Activated CD4-positive, alpha-beta T cell treated with anti-CD3 and anti-CD28 coated beads, Interleukin-2, amount 10 ng/mL, durations not matched to agents 24 days and 14 days (primary cell): ENCODE measurements at regions of chr9 and their contacts with region 1.

Region 1: DNA sequence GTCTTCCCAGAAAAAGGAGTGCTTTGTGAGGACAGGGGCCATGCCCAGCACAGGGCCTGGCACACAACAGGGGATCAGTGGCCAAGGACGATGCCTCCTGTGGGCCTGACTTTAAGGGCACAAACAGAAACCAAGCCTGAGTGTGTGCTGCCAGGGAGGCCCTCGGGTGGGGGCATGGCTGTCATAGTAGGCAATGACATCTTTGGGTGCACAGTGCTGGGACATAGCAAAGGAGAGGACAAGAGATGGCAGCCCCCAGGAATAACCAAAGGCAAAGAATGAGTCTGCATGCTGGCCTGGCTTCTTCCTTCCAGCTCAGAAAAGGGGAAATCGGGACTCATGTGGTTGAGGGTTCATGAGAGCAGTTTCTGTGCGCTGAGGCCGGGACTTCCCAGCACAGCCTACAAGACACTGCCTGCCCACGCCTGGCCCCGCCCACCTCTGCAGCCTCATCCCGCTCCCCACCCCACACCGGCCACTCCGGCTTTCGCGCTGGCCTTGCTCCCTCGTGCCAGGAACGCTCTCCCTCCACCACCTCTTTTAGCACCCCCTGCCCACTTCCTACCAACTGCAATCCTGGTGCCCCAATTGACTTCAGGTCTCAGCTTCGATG is 13.8 kb upstream of the LHX2 start:
- DNase-seq: peak; percentile 69
- H3K4me3 Mint-ChIP-seq: peak overlapping the region; percentile 48
- H3K27ac Mint-ChIP-seq: peak overlapping the region; percentile 46
- H3K4me1 Mint-ChIP-seq: peaks cover 27% of the 10 kb centered on the region
- H3K27me3 Mint-ChIP-seq: peaks cover 75% of the 10 kb centered on the region

Region 2: DNA sequence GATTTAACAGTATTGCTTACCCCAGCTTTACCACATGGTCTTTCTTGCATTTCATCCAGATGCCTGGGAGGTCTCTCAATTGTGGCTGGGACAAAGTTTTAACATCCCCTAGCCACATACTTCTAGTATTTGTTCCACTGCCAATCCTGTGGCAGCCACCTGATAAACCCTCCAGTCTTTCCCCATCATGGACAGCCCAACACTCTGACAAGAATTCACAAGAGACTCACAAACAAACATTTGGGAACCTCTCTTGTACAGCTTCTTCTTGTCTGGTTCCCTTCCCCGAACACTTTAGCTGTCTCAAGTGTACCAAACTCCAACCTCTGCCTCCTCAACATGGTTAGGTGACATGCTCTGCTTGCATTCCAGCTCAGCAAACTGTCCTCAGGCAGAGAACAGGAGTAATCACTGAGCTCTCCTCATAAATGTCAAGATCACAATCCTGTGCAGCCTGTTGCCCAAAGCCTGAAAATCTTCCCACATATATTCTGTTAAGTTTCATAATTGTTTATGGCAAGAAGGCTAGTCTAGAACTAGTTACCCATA is 789.1 kb before region 1 on chr9:
- intact Hi-C with region 1: no loop called
- DNase-seq: no peak
- H3K4me3 Mint-ChIP-seq: no peak overlapping the region
- H3K27ac Mint-ChIP-seq: no peak overlapping the region
- H3K4me1 Mint-ChIP-seq: no peaks in the 10 kb centered on the region
- H3K27me3 Mint-ChIP-seq: no peaks in the 10 kb centered on the region

Region 3: GRCh38 chr9:123544007-123544827 is 453.6 kb before region 1 on chr9:
- intact Hi-C with region 1: loop called (anchors 2 kb)
- DNase-seq: peak; percentile 68
- H3K4me3 Mint-ChIP-seq: no peak overlapping the region
- H3K27ac Mint-ChIP-seq: no peak overlapping the region
- H3K4me1 Mint-ChIP-seq: peaks cover 7% of the 10 kb centered on the region
- H3K27me3 Mint-ChIP-seq: peaks cover 1% of the 10 kb centered on the region

Region 4: GRCh38 chr9:123637945-123638634 is 359.7 kb before region 1 on chr9:
- intact Hi-C with region 1: loop called (anchors 5 kb)
- DNase-seq: peak; percentile 84
- H3K4me3 Mint-ChIP-seq: peak overlapping the region; percentile 77
- H3K27ac Mint-ChIP-seq: peak overlapping the region; percentile 13
- H3K4me1 Mint-ChIP-seq: peaks cover 34% of the 10 kb centered on the region
- H3K27me3 Mint-ChIP-seq: peaks cover 26% of the 10 kb centered on the region

Region 5: DNA sequence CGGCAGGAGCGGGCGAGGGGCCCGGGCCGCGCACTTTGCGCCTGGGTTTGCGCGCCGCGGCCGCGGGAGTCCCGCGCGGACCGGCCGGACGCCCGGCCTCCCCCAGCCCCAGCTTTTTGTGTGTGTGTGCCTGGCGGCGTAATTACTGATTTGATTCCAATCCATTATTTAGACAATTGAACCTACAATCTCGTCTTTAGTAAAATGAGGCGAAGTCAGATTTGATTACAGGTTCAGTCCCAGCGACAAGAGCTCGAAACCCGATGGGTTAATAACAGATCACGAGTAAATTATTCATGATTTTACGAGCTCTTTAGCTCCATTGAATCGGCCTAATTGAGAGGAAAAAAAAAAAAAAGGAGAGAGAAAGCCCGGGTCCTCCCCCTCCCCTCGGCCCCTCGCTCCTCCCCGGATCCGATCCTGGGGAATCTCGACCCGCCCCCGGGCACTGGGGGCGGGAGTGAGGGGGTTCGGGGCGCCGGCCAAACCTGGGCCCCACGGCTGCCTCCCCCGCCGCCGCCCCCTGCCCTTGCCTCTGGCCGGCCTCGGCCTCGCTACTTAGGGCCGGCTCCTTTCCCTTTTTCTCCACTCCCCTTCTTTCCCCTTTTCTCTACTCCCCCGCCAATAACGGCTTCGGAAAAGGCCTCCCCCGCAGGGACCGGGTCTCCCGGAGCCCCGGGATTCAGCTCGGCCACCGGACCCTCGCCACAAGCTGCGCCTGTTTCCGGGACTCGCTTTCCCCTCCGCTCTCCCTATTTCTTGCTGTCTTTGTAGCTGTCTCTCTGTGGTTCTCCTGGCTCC is 20.4 kb after region 1 on chr9:
- intact Hi-C with region 1: loop called (anchors 2 kb)
- DNase-seq: no peak
- H3K4me3 Mint-ChIP-seq: peak overlapping the region; percentile 23
- H3K27ac Mint-ChIP-seq: peak overlapping the region; percentile 79
- H3K4me1 Mint-ChIP-seq: peaks cover 9% of the 10 kb centered on the region
- H3K27me3 Mint-ChIP-seq: peaks cover 77% of the 10 kb centered on the region